Thyroid gland (tissue), 4 donors: ENCODE measurements at regions of chr19 and their contacts with region 1.

Region 1: DNA sequence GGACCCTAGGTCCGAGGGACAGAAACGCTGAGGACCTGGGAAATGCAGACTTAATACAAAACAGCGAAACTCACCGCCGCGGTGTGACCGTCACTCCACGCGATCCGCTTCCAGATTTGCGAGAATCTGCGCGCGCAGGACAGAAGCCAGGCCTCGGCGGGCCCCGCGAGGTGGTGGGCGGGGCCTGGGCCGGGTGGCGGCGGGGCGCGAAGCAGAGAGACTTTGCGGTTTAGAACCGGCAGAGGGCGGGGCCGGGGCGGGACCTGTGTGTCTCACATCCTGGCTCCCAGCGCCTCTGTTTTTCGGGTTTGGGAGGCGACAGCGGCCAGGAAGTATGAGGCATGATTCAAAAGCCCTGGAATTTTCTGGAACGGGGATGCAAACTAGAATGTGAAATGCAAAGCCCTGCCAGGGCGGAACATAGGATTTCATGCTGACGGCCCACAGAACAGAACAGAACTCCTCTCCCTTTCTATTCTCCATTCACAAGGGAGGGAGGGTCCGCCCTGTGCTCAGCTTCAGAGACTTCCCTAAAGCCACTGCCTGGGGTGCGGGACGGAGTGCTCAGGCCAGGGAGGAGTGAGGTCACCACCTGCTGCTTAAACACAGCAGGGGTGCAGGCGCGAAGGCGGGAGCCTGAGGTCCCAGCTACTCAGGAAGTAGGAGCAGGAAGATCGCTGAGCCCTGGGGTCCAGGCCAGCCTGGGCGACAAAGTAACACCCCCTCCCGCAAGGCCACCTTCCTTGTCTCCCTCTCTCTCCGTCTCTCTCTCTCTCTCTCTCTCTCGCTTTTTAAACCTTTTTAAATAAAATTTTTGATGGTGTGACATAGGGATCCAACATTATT is 44.3 kb downstream of the ZNF611 start:
- DNase-seq: peak; percentile 95 to 97
- H3K4me3 ChIP-seq: peak overlapping the region; percentile 31 to 74 (median 71)
- H3K27ac ChIP-seq: peak overlapping the region; percentile 90 to 95 (median 92)
- H3K4me1 ChIP-seq: peaks cover 6 to 15% of the 10 kb centered on the region in 2 donors
- H3K27me3 ChIP-seq: no peaks in the 10 kb centered on the region
- CTCF ChIP-seq: peak in 3 of 6 experiments; percentile 8 to 36 (median 28)
- POLR2A ChIP-seq: peak in 1 of 2 donors; percentile 90

Region 2: GRCh38 chr19:52637718-52638585 is 52.6 kb before region 1 on chr19 and contains the start of gene ZNF83:
- intact Hi-C with region 1: loop called (anchors 5 kb)
- DNase-seq: peak; percentile 98 to 99
- H3K4me3 ChIP-seq: peak within 1 kb of the TSS; percentile 36 to 61 (median 42)
- H3K27ac ChIP-seq: peak within 1 kb of the TSS; percentile 36 to 84 (median 75)
- H3K4me1 ChIP-seq: peaks cover 5 to 11% of the 10 kb centered on the region in 2 donors
- H3K27me3 ChIP-seq: no peaks in the 10 kb centered on the region
- CTCF ChIP-seq: no peak
- POLR2A ChIP-seq: peak in 1 of 2 donors; percentile 61
- total RNA-seq, gene ZNF83: 75.3 to 125 (median 97.0) TPM

Region 3: GRCh38 chr19:52786457-52787359 is 96.1 kb after region 1 on chr19 and contains the start of gene ZNF600:
- intact Hi-C with region 1: no loop called
- DNase-seq: peak; percentile 94 to 96
- H3K4me3 ChIP-seq: peak within 1 kb of the TSS; percentile 37 to 74 (median 72)
- H3K27ac ChIP-seq: peak within 1 kb of the TSS in 1 of 3 donors; percentile 68
- H3K4me1 ChIP-seq: peaks cover 0 to 8% of the 10 kb centered on the region in 2 donors
- H3K27me3 ChIP-seq: no peaks in the 10 kb centered on the region
- CTCF ChIP-seq: peak in 3 of 6 experiments; percentile 27 to 42 (median 30)
- POLR2A ChIP-seq: peak in 1 of 2 donors; percentile 65
- total RNA-seq, gene ZNF600: 8.8 to 15.3 (median 12.4) TPM

Region 4: DNA sequence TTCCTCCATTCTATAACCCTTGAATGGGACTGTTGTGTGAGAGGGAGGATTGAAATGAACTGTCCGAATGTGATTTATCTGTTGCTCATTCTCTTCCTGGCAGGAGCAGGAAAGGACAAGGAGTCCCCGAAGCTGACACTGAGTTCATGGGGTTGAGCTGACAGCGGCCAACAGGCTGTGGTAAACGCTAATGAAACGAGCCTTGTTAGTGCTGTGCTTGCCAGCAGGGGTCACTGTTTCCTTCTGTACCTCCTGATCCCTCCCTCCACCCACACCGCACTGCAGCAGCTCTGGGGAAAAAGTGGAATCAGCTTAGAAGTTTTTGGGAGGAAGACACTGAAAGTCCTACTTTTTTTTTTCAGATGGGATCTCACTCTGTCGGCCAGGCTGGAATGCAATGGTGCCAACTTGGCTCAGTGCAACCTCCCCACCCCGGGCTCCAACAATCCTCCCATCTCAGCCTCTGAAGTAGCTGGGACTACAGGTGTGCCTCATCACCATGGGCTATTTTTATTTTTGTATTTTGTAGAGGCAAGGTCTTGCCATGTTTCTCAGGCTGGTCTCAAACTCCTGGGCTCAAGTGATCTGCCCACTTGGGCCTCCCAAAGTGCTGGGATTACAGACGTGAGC is 734.5 kb after region 1 on chr19:
- intact Hi-C with region 1: no loop called
- DNase-seq: peak; percentile 73 to 77
- H3K4me3 ChIP-seq: no peak overlapping the region
- H3K27ac ChIP-seq: no peak overlapping the region
- H3K4me1 ChIP-seq: no peaks in the 10 kb centered on the region
- H3K27me3 ChIP-seq: no peaks in the 10 kb centered on the region
- CTCF ChIP-seq: peak; percentile 41 to 80 (median 70)
- POLR2A ChIP-seq: no peak